Activated naive CD4-positive, alpha-beta T cell treated with anti-CD3 and anti-CD28 coated beads for 36 hours (primary cell): ENCODE measurements at regions of chr1 and their contacts with region 1.

Region 1: GRCh38 chr1:150072959-150073358 is 5.4 kb downstream of the VPS45 start:
- DNase-seq: no peak
- H3K4me3 Mint-ChIP-seq: no peak overlapping the region
- H3K27ac Mint-ChIP-seq: no peak overlapping the region
- H3K4me1 Mint-ChIP-seq: peaks cover 23% of the 10 kb centered on the region
- H3K27me3 Mint-ChIP-seq: no peaks in the 10 kb centered on the region

Region 2: DNA sequence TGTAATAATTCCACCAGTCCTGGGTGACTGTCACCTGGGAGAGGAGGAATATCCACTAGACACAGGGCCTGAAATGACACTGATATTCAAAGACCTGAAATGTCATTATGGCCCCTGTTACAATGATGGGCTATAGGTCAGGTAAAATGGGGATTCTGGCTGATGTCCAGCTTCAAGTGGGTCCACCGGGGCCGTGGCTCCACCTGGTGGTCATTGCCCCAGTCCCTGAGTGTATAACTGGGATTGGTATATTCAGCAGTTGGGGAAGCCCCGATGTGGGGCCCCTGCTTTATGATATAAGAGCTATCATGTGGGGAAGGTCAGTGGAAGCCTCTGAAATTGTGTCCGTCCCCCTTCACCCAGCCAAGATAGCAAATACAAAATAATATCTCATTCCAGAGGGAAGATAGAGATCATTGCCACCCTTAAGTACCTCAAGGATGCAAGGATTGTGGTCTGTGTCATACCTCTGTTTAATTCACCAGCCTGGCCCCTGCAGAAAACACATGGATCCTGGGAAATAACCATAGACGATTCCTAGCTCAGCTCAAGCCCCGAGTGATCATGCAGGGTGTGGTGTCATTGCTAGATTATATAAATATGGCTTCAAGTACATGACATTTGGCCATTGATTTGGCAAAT is 96.1 kb after region 1 on chr1:
- CTCF ChIA-PET with region 1: interaction called, 122 read pairs
- intact Hi-C with region 1: loop called (anchors 1 kb)
- DNase-seq: peak; percentile 72
- H3K4me3 Mint-ChIP-seq: no peak overlapping the region
- H3K27ac Mint-ChIP-seq: no peak overlapping the region
- H3K4me1 Mint-ChIP-seq: no peaks in the 10 kb centered on the region
- H3K27me3 Mint-ChIP-seq: no peaks in the 10 kb centered on the region

Region 3: GRCh38 chr1:150235852-150236613 is 163.1 kb after region 1 on chr1 and contains the start of gene ANP32E:
- CTCF ChIA-PET with region 1: no interaction called
- intact Hi-C with region 1: no loop called
- DNase-seq: peak; percentile 97
- H3K4me3 Mint-ChIP-seq: no peak within 1 kb of the TSS
- H3K27ac Mint-ChIP-seq: no peak within 1 kb of the TSS
- H3K4me1 Mint-ChIP-seq: peaks cover 21% of the 10 kb centered on the region
- H3K27me3 Mint-ChIP-seq: no peaks in the 10 kb centered on the region
- total RNA-seq, gene ANP32E: 201 to 202 TPM

Region 4: DNA sequence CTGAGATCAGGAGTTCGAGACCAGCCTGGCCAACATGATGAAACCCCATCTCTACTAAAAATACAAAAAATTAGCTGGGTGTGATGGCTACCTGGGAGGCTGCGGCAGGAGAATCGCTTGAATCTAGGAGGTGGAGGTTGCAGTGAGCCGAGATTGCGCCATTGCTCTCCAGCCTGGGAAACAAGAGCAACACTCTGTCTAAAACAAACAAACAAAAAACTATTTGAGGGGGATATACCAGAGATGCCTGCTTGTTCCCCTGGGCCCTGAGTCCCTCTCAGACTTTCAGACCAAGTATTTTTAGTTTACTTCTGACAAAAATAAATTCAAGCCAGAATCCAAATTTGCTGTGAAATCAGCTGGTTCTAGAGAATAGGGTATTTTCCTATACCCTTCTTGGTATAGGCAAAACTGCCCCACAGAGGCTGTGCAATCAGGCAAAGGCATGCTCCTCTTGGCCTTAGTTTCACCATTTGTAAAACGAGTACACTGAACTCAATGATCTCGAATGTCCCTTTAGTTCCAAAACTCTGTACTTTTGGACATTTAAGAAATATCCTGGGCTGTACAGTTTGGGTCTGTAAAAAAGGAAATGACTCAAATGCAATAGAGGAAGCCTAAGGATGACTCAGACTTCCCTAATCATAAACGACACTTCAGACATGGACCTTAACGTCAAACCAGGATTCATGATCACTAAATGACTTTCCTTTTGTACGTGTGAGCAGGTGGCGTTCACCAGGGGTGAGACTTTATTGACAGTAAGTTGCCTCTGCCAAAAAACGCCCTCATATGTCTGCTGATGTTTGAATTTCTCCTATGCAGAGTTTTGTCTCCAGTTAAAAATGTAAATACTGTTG is 540.3 kb after region 1 on chr1:
- CTCF ChIA-PET with region 1: no interaction called
- intact Hi-C with region 1: no loop called
- DNase-seq: peak; percentile 81
- H3K4me3 Mint-ChIP-seq: peak overlapping the region; percentile 41
- H3K27ac Mint-ChIP-seq: peak overlapping the region; percentile 93
- H3K4me1 Mint-ChIP-seq: peaks cover 64% of the 10 kb centered on the region
- H3K27me3 Mint-ChIP-seq: no peaks in the 10 kb centered on the region